Vagina (tissue), 2 donors: ENCODE measurements at regions of chr3 and their contacts with region 1.

Region 1: GRCh38 chr3:58188173-58188564 is 22.6 kb downstream of the DNASE1L3 start:
- DNase-seq: no peak
- H3K4me3 ChIP-seq: no peak overlapping the region
- H3K27ac ChIP-seq: peak overlapping the region; percentile 55
- H3K4me1 ChIP-seq: peaks cover 8% of the 10 kb centered on the region
- H3K27me3 ChIP-seq: no peaks in the 10 kb centered on the region
- CTCF ChIP-seq: no peak
- POLR2A ChIP-seq: no peak

Region 2: DNA sequence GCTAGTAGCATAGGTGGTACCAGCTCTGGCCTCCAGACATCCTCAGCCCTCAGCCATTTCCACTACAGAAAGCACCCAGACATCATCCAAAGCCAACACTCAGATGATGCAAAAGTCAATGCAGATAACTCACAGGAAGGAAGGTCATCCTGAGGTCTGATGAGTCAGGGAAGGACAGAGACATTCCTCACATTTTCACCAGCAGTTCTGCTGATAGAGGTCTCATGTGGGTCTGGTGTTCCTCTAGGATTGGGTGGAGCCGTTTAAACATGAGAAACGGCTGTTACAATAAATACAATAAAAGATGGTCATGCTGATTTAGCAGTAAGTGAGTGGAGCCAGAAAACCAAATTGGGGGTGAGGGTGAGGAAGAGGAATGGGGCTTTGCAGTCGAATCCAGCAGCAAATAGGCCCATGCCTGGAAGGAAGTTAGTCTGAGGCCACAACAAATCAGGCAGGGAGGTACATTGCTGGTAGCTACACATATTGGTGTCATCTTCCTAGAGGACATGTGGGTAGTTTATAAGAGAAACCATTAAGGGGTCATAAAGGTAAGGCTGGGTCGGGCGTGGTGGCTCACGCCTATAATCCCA is 213.3 kb before region 1 on chr3:
- intact Hi-C with region 1: no loop called
- DNase-seq: no peak
- H3K4me3 ChIP-seq: no peak overlapping the region
- H3K27ac ChIP-seq: no peak overlapping the region
- H3K4me1 ChIP-seq: peaks cover 31% of the 10 kb centered on the region
- H3K27me3 ChIP-seq: no peaks in the 10 kb centered on the region
- CTCF ChIP-seq: no peak
- POLR2A ChIP-seq: no peak

Region 3: GRCh38 chr3:58332575-58333188 is 144.5 kb after region 1 on chr3 and contains the start of gene PXK:
- intact Hi-C with region 1: no loop called
- DNase-seq: no peak
- H3K4me3 ChIP-seq: peak within 1 kb of the TSS; percentile 90 to 95
- H3K27ac ChIP-seq: peak within 1 kb of the TSS; percentile 84
- H3K4me1 ChIP-seq: peaks cover 58% of the 10 kb centered on the region
- H3K27me3 ChIP-seq: no peaks in the 10 kb centered on the region
- CTCF ChIP-seq: no peak
- POLR2A ChIP-seq: peak in 1 of 2 donors; percentile 48
- total RNA-seq, gene PXK: 59.9 TPM

Region 4: GRCh38 chr3:58414538-58415197 is 226.5 kb after region 1 on chr3:
- intact Hi-C with region 1: loop called (anchors 10 kb)
- DNase-seq: no peak
- H3K4me3 ChIP-seq: no peak overlapping the region
- H3K27ac ChIP-seq: peak overlapping the region; percentile 25
- H3K4me1 ChIP-seq: peaks cover 54% of the 10 kb centered on the region
- H3K27me3 ChIP-seq: no peaks in the 10 kb centered on the region
- CTCF ChIP-seq: peak; percentile 81 to 83 (median 82)
- POLR2A ChIP-seq: no peak

Region 5: DNA sequence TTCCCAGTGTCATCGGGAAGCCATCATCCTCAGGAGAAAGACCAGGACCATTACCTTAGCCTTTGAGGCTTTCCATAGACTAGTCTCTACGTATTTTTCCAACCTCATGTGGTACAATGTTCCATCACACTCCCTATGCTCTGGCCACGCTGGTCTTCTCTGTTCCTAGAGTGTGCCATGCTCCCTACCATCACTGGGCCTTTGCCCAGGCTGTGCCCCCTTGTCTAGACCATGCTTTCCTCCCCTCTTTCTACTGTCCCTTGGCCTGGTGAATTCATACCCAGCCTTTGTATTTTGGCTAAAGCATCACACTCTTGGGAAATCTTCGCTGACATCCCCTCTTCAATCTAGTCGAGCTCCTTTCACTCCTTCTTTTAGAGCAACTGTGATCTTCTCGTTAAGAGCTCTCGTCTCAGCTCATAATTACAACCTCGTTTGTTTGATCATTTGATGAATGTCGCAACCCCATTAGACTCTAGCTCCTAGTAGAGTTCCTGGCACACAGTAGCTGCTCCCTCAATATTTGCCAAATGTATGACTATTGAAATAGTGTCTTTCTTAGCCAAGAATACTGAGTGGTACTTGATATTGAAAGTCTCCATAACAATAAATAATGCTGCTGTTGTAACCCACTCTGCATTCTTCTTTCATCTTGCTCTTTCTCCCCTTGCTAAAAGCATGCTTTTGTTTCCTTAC is 578.6 kb after region 1 on chr3:
- intact Hi-C with region 1: no loop called
- DNase-seq: no peak
- H3K4me3 ChIP-seq: no peak overlapping the region
- H3K27ac ChIP-seq: no peak overlapping the region
- H3K4me1 ChIP-seq: no peaks in the 10 kb centered on the region
- H3K27me3 ChIP-seq: no peaks in the 10 kb centered on the region
- CTCF ChIP-seq: no peak
- POLR2A ChIP-seq: no peak